Transverse colon (tissue), 4 donors: ENCODE measurements at regions of chr4 and their contacts with region 1.

Region 1: GRCh38 chr4:1863297-1864033 is 7.5 kb upstream of the LETM1 start:
- DNase-seq: no peak
- H3K4me3 ChIP-seq: no peak overlapping the region
- H3K27ac ChIP-seq: no peak overlapping the region
- H3K4me1 ChIP-seq: peaks cover 4 to 25% (median 11%) of the 10 kb centered on the region in 4 donors
- H3K27me3 ChIP-seq: peaks cover 30% of the 10 kb centered on the region
- CTCF ChIP-seq: no peak
- EP300 ChIP-seq: no peak
- POLR2A ChIP-seq: no peak

Region 2: GRCh38 chr4:1837069-1837468 is 26.4 kb before region 1 on chr4:
- in situ Hi-C with region 1: no loop called
- intact Hi-C with region 1: loop called (anchors 1 kb)
- DNase-seq: no peak
- H3K4me3 ChIP-seq: no peak overlapping the region
- H3K27ac ChIP-seq: no peak overlapping the region
- H3K4me1 ChIP-seq: peaks cover 0 to 9% (median 4%) of the 10 kb centered on the region in 4 donors
- H3K27me3 ChIP-seq: no peaks in the 10 kb centered on the region
- CTCF ChIP-seq: no peak
- EP300 ChIP-seq: no peak
- POLR2A ChIP-seq: no peak

Region 3: DNA sequence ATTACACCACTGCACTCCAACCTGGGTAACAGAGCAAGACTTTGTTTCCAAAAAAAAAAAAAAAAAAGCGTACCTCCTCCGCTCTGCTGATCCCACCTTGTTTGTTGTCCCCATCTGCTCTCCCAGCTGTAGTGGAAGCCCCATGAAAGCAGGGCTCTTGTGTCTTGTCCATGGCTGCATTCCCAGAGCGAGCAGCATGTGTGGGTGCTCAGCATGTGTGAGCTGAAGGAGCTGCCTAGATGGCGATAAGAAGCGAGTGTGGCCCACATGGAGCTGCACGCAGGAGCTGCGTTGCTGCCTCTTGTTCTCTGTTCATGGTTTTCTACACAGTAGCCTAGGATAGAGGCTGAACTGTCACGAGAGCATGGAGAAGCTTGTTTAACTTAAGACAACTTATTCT is 20.1 kb after region 1 on chr4:
- in situ Hi-C with region 1: no loop called
- intact Hi-C with region 1: no loop called
- DNase-seq: no peak
- H3K4me3 ChIP-seq: no peak overlapping the region
- H3K27ac ChIP-seq: no peak overlapping the region
- H3K4me1 ChIP-seq: peaks cover 9 to 71% (median 40%) of the 10 kb centered on the region in 4 donors
- H3K27me3 ChIP-seq: no peaks in the 10 kb centered on the region
- CTCF ChIP-seq: no peak
- EP300 ChIP-seq: no peak
- POLR2A ChIP-seq: no peak